Panc1 (cell line): ENCODE measurements at regions of chr14 and their contacts with region 1.

Region 1: GRCh38 chr14:56474419-56475022 is 105.1 kb upstream of the TMEM260 start:
- DNase-seq: peak; percentile 20
- ATAC-seq: no peak
- H3K4me3 ChIP-seq: no peak overlapping the region
- H3K27ac ChIP-seq: no peak overlapping the region
- H3K4me1 ChIP-seq: no peaks in the 10 kb centered on the region
- H3K27me3 ChIP-seq: no peaks in the 10 kb centered on the region
- CTCF ChIP-seq: peak; percentile 74; the same call in 1 of the 2 replicates

Region 2: GRCh38 chr14:55430024-55430690 is 1044.4 kb before region 1 on chr14:
- CTCF ChIA-PET with region 1: no interaction called
- POLR2A ChIA-PET with region 1: no interaction called
- in situ Hi-C with region 1: no loop called
- intact Hi-C with region 1: loop called (anchors 10 kb)
- DNase-seq: no peak
- ATAC-seq: peak; percentile 86
- H3K4me3 ChIP-seq: no peak overlapping the region
- H3K27ac ChIP-seq: no peak overlapping the region
- H3K4me1 ChIP-seq: peaks cover 6% of the 10 kb centered on the region
- H3K27me3 ChIP-seq: no peaks in the 10 kb centered on the region
- CTCF ChIP-seq: peak; percentile 66

Region 3: DNA sequence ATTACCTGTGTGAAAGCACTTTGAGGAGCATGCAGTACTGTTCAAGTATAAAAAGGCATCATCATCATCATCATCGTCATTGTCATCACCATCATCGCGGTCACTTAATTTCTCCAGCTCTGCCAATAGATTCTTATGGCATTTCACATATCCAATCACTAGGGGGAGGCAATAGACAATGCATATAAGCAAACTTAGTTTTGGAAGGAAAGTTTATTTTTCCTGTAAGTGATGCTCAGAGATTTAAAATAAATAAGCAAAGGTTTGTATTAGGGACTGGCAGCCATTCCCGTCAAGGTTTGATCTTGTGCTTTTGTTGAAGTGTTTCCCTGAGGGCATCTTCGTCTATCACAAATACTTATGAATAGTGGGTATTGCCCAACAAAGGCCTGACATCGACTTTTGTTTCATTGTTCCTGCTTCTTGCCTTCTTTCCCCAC is 767.1 kb before region 1 on chr14:
- CTCF ChIA-PET with region 1: interaction called, 3 read pairs
- POLR2A ChIA-PET with region 1: no interaction called
- in situ Hi-C with region 1: no loop called
- intact Hi-C with region 1: loop called (anchors 2 kb)
- DNase-seq: no peak
- ATAC-seq: no peak
- H3K4me3 ChIP-seq: no peak overlapping the region
- H3K27ac ChIP-seq: no peak overlapping the region
- H3K4me1 ChIP-seq: no peaks in the 10 kb centered on the region
- H3K27me3 ChIP-seq: no peaks in the 10 kb centered on the region
- CTCF ChIP-seq: peak; percentile 52